ENCODE measurements at regions of chr15 and their contacts with region 1.

Region 1: DNA sequence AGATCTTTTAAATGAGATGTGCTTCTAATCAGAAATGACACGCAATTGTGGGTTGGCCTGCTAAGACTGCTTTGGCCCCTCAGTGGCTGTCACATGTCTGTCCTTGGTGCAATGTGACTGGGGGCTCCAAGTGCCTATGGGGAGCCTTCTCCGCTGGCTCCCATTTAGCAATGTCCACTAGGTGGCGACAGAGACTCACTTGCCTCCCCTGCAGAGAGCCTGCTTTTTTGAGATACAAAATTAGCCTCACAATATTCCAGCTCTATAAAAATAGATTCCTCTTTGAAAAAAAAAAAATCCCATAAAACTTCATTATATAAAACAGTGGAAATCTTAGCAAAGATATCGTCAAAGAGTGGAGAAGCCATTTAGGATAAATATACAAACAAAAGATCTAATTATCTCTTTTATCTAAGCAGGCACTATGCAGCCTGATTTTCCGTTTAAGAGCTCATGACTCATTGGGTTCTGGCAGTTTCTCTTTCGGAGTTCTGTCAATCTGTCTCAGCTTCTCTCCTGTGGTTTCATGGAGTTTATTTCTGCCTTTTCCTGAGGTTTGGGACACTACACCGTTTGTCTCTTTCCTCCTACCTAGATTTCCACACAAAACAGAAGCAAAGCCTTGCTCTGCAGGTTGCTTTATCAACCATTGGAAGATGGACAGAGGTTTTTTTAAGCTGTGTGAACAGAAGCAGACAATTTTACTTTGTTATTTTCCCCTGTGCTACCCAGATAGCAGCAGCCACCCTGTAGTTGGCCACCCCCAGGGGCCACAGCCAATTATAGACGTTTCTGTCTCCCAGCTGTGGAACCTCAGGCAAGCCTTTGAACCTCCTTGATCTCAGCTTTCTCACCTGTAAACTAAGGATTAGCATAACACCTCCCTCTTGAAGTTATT is 68.4 kb upstream of the TNFAIP8L3 start:
- DNase-seq: peak in 8 of 9 donors; percentile 13 to 64 (median 26)
- ATAC-seq: peak; percentile 77
- H3K4me3 ChIP-seq: no peak overlapping the region
- H3K4me3 Mint-ChIP-seq: no peak overlapping the region
- H3K27ac ChIP-seq: no peak overlapping the region
- H3K27ac Mint-ChIP-seq: no peak overlapping the region
- H3K4me1 ChIP-seq: peaks cover 0 to 6% of the 10 kb centered on the region in 2 donors
- H3K4me1 Mint-ChIP-seq: peaks cover 0 to 7% (median 0%) of the 10 kb centered on the region in 7 donors
- H3K27me3 ChIP-seq: peaks cover 7 to 12% of the 10 kb centered on the region in 2 donors
- H3K27me3 Mint-ChIP-seq: peaks cover 16 to 39% (median 27%) of the 10 kb centered on the region in 5 donors

Region 2: GRCh38 chr15:51192521-51193280 is 29.6 kb after region 1 on chr15:
- CTCF ChIA-PET with region 1: interaction called, 3 read pairs
- POLR2A ChIA-PET with region 1: no interaction called
- intact Hi-C with region 1: loop called (anchors 1 kb)
- DNase-seq: peak; percentile 9 to 81 (median 45)
- ATAC-seq: peak; percentile 80
- H3K4me3 ChIP-seq: no peak overlapping the region
- H3K4me3 Mint-ChIP-seq: no peak overlapping the region
- H3K27ac ChIP-seq: no peak overlapping the region
- H3K27ac Mint-ChIP-seq: peak overlapping the region in 1 of 9 donors; percentile 41
- H3K4me1 ChIP-seq: no peaks in the 10 kb centered on the region
- H3K4me1 Mint-ChIP-seq: peaks cover 0 to 4% (median 0%) of the 10 kb centered on the region in 7 donors
- H3K27me3 ChIP-seq: peaks cover 2 to 3% of the 10 kb centered on the region in 2 donors
- H3K27me3 Mint-ChIP-seq: peaks cover 26 to 61% (median 49%) of the 10 kb centered on the region in 5 donors

Region 3: DNA sequence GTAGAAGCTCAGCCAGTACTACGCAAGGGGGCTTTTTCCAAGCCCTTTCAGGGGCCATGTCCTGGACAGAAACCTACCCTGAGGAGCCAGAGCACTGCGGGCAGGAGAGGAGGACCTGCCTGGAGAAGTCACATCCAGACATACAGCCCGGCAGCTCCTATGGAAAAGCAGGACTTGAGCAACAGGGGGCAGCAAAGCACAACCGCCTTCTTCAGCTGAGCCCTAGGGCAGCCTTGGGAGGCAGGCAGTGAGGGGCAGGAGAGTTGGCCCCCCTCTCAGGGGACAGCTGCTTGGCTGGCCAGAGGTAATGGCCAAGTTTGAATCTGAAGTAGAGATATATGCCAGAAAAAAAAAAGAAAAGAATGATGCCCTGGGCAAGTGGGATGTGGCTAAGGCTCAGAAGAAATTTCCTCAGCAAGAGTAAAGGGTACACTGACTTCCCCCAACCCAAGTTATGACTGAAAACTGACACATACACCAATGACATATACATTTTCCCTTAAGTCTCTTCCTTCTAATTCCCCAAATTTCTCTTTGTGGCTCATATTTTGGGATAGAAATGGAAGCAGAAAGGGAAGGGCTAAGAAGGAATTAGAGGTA is 118.4 kb after region 1 on chr15:
- CTCF ChIA-PET with region 1: no interaction called
- POLR2A ChIA-PET with region 1: no interaction called
- intact Hi-C with region 1: loop called in 1 of 2 experiments (anchors 2 kb)
- DNase-seq: no peak
- ATAC-seq: no peak
- H3K4me3 ChIP-seq: no peak overlapping the region
- H3K4me3 Mint-ChIP-seq: no peak overlapping the region
- H3K27ac ChIP-seq: no peak overlapping the region
- H3K27ac Mint-ChIP-seq: no peak overlapping the region
- H3K4me1 ChIP-seq: no peaks in the 10 kb centered on the region
- H3K4me1 Mint-ChIP-seq: peaks cover 0 to 12% (median 0%) of the 10 kb centered on the region in 7 donors
- H3K27me3 ChIP-seq: no peaks in the 10 kb centered on the region
- H3K27me3 Mint-ChIP-seq: peaks cover 12 to 34% (median 24%) of the 10 kb centered on the region in 5 donors

Region 4: DNA sequence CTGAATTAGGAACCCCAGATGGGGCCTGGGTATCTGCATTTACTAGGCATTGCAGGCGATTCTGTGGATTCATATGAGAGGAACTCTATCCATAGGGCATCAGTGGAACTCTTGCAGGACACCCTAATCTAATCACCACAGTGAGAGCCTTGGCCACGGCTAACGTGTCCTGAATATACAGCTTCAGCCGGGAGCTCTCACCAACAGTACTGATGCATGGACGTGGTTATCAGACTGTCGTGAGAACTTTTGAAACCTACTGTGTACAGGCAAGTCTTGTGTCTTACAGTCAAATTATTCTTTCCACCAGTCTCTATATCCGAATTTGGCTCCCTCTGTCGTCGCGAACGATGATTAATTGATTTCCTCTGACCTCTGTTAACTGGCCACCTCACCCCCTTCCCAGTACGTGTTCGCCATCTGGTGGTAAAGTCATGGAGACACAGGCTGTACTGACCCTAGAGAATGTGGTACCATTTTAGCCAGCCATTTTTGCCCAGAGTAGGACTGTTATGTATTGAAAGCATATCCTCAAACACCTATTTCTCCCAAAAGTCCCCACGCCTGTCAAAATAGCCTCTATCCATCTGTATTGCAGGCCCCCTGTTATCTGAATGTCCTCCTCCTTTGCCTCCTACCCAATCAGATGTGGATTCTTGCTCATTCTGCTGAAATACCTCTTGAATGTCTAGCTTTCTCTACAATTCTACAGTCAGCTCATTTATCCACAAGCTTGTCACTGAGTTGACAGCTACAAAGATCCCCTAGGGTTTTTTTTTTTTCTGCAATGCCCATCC is 218.1 kb after region 1 on chr15:
- CTCF ChIA-PET with region 1: no interaction called
- POLR2A ChIA-PET with region 1: no interaction called
- intact Hi-C with region 1: loop called (anchors 1 to 5 kb)
- DNase-seq: peak in 1 of 9 donors; percentile 25
- ATAC-seq: peak; percentile 84
- H3K4me3 ChIP-seq: no peak overlapping the region
- H3K4me3 Mint-ChIP-seq: no peak overlapping the region
- H3K27ac ChIP-seq: no peak overlapping the region
- H3K27ac Mint-ChIP-seq: no peak overlapping the region
- H3K4me1 ChIP-seq: no peaks in the 10 kb centered on the region
- H3K4me1 Mint-ChIP-seq: peaks cover 0 to 5% (median 0%) of the 10 kb centered on the region in 7 donors
- H3K27me3 ChIP-seq: no peaks in the 10 kb centered on the region
- H3K27me3 Mint-ChIP-seq: peaks cover 0 to 29% (median 16%) of the 10 kb centered on the region in 5 donors

Region 5: DNA sequence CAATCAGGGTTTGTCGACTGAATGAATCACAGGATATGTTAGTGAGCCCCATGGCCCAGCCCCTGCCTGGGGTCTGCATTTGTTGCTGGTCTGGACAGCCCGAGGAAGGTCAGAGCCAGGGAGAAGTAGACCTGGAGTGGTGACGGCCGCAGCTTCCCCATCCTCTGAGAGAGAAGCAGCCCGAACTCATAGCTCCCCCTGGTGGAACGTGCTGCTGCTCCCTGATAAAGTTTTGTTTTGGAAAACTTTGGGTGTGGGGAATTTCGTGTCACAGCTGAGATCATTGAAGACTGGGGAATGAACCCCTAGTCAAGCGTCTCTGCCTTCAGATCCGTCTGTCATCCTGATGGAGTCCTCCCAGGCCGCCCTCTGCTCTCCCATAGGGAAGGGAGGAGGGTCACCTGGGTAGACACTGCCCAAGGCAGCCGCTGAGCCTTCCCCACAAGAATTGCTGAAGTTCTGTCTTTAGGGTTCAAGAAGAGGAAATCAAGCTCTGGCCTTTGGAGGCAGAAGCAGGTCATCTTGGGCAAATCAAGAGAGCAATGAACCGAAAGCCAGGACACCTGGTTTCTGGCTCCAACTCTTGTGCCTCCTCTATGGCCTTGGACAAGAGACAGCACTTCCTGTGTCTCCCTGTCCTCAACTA is 238.9 kb after region 1 on chr15:
- CTCF ChIA-PET with region 1: no interaction called
- POLR2A ChIA-PET with region 1: no interaction called
- intact Hi-C with region 1: loop called in 1 of 2 experiments (anchors 5 kb)
- DNase-seq: no peak
- ATAC-seq: peak; percentile 57
- H3K4me3 ChIP-seq: no peak overlapping the region
- H3K4me3 Mint-ChIP-seq: no peak overlapping the region
- H3K27ac ChIP-seq: no peak overlapping the region
- H3K27ac Mint-ChIP-seq: no peak overlapping the region
- H3K4me1 ChIP-seq: no peaks in the 10 kb centered on the region
- H3K4me1 Mint-ChIP-seq: no peaks in the 10 kb centered on the region
- H3K27me3 ChIP-seq: no peaks in the 10 kb centered on the region
- H3K27me3 Mint-ChIP-seq: peaks cover 8 to 35% (median 26%) of the 10 kb centered on the region in 5 donors

Region 6: DNA sequence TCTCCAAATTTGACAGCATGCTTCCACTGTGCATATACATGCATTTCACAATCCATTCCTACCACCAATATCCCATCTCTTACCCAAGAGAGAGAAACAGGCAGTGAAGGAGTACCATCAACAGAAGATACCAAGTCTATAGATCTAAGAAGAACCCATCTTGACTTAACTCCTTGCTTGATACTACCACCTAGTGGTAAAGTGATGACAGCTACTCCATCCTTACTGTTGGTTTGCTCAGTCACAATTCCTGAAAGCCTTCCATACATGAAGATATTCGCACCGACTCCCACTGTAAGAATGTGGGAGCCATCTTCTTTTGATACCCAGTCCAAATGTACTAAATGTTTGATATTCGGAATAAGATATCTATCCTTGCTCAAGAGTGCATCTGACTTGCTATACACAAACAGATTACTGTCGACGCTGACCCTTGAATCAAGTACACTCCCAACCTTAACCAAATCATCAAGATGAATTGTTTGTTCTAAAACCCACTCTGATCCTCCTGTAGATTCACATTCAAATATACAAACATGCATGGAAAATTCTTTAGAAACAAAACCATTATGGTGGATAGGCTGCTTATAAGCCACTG is 336.4 kb after region 1 on chr15:
- CTCF ChIA-PET with region 1: interaction called, 4 read pairs
- POLR2A ChIA-PET with region 1: no interaction called
- intact Hi-C with region 1: loop called in 1 of 2 experiments (anchors 10 kb)
- DNase-seq: peak in 1 of 9 donors; percentile 7
- ATAC-seq: no peak
- H3K4me3 ChIP-seq: no peak overlapping the region
- H3K4me3 Mint-ChIP-seq: no peak overlapping the region
- H3K27ac ChIP-seq: no peak overlapping the region
- H3K27ac Mint-ChIP-seq: no peak overlapping the region
- H3K4me1 ChIP-seq: no peaks in the 10 kb centered on the region
- H3K4me1 Mint-ChIP-seq: peaks cover 0 to 6% (median 1%) of the 10 kb centered on the region in 7 donors
- H3K27me3 ChIP-seq: no peaks in the 10 kb centered on the region
- H3K27me3 Mint-ChIP-seq: no peaks in the 10 kb centered on the region

Measured in naive thymus-derived CD4-positive, alpha-beta T cell (primary cell).